Right ventricle myocardium inferior (tissue), 1 donor: ENCODE measurements at regions of chrX and their contacts with region 1.

Region 1: GRCh38 chrX:115350711-115351381 is 61.3 kb downstream of the LUZP4 start:
- DNase-seq: no peak
- ATAC-seq: no peak

Region 2: DNA sequence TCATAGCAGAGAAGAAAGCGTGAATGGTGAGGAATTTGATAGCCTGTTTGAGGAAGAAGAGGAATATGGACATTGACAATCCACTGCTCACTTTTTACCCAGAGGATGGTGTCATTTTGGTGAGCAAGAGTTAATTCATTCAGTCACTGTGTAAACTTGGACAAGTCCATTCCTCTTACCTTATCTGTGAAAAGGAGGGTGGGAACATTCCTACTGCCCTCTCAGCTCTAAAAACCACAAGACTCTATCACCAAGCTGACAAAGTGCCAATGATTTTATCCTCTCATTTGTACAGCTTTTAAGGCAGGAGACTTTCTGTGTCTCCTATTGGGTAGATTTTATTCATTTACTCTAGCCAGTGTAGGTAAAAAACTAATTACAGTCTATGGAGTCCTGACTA is 42.4 kb after region 1 on chrX:
- intact Hi-C with region 1: no loop called
- DNase-seq: no peak
- ATAC-seq: no peak

Region 3: DNA sequence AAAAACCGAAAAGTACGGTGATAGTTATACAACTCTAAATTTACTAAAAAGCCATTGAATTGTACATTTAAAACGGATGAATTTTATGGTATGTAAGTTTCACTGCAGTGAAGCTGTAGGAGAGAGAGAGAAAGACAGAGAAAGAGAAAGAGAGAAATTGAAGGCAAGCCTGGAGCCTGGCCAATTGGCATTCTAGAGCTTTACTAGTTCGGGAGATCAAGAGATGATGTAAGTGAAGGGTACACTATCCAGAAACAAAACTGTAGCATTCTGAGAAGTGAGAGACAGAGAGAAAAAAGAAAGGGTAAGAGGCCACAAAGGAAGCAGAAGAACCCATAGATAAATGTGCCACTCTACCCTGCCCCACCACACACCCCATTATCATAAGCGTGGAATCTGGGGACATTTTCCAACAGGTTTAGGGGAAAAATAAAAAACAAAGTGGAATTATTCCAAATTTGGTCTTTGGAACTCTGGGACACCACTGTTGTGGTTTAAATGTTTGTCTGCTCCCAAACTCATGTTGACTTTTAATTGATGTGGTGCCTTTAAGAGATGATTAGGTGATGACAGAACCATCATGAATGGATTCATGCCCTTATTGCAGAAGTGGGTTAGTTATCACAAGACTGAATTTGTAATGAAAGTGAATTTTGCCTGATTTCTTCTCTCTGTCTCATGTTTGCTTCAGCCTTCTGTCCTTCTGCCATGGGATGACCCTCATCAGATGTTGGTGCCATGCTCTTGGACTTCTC is 87.2 kb after region 1 on chrX:
- intact Hi-C with region 1: loop called (anchors 10 kb)
- DNase-seq: no peak
- ATAC-seq: no peak